Transverse colon (tissue), 4 donors: ENCODE measurements at regions of chr9 and their contacts with region 1.

Region 1: GRCh38 chr9:28970241-28970654 is 1397.0 kb upstream of the C9orf72 start:
- DNase-seq: no peak
- H3K4me3 ChIP-seq: no peak overlapping the region
- H3K27ac ChIP-seq: no peak overlapping the region
- H3K4me1 ChIP-seq: no peaks in the 10 kb centered on the region
- H3K27me3 ChIP-seq: no peaks in the 10 kb centered on the region
- CTCF ChIP-seq: no peak
- EP300 ChIP-seq: no peak
- POLR2A ChIP-seq: no peak

Region 2: GRCh38 chr9:27791311-27791710 is 1178.9 kb before region 1 on chr9:
- in situ Hi-C with region 1: no loop called
- intact Hi-C with region 1: no loop called
- DNase-seq: no peak
- H3K4me3 ChIP-seq: no peak overlapping the region
- H3K27ac ChIP-seq: no peak overlapping the region
- H3K4me1 ChIP-seq: no peaks in the 10 kb centered on the region
- H3K27me3 ChIP-seq: no peaks in the 10 kb centered on the region
- CTCF ChIP-seq: no peak
- EP300 ChIP-seq: no peak
- POLR2A ChIP-seq: no peak

Region 3: GRCh38 chr9:28866951-28867350 is 103.3 kb before region 1 on chr9:
- in situ Hi-C with region 1: no loop called
- intact Hi-C with region 1: no loop called
- DNase-seq: no peak
- H3K4me3 ChIP-seq: no peak overlapping the region
- H3K27ac ChIP-seq: no peak overlapping the region
- H3K4me1 ChIP-seq: no peaks in the 10 kb centered on the region
- H3K27me3 ChIP-seq: no peaks in the 10 kb centered on the region
- CTCF ChIP-seq: no peak
- EP300 ChIP-seq: no peak
- POLR2A ChIP-seq: no peak

Region 4: DNA sequence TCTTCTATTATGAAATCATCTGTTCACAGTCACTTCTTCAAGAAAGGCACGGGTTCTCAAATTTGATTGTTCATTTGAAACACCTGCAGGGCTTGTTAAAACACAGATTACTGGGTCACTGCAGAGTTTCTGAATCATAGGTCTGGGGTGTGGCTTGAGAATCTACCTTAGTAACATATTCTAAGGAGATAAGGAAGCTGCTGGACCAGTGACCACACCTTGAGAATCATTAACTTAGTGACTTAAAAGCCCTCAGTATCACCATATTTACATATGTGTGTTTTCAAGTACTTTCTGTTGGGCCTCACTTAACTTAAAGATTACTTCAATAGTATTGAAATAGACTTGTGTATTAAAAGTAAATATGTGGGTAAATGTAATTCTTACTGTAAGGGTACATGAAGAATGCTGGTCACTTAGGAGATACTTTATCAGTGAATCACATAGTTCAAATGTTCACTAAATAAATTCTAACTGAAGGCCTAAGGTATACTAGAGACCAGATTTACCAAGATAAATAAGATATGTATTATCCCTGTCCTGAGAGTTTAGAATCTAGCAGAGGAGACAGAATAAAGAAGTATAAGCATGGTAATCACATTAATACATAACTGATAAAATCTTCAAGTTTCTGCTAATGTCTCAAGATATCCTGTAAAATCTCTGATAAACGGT is 54.9 kb before region 1 on chr9:
- in situ Hi-C with region 1: no loop called
- intact Hi-C with region 1: loop called (anchors 10 kb)
- DNase-seq: peak; percentile 52
- H3K4me3 ChIP-seq: no peak overlapping the region
- H3K27ac ChIP-seq: peak overlapping the region; percentile 53 to 81 (median 66)
- H3K4me1 ChIP-seq: peaks cover 0 to 18% (median 6%) of the 10 kb centered on the region in 4 donors
- H3K27me3 ChIP-seq: no peaks in the 10 kb centered on the region
- CTCF ChIP-seq: no peak
- EP300 ChIP-seq: no peak
- POLR2A ChIP-seq: no peak

Region 5: DNA sequence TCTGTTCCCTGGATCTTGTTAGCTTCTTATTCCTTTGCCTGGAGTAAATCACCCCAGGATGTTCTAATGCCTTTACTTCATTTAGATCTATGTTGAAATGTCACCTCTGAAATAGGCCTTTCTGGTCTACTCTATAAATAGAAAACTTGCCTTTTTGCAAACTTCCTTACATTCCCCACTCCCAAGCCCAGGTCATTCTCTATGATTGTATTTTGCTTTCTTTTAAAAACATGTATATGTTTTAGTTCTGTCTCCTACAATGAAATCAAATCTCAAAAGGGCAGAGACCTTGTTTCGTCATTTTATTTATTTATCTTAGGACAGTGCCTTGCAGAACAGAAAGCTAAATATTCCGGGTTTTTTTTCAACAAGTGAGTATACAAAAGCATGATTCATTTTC is 260.7 kb after region 1 on chr9:
- in situ Hi-C with region 1: no loop called
- intact Hi-C with region 1: no loop called
- DNase-seq: no peak
- H3K4me3 ChIP-seq: no peak overlapping the region
- H3K27ac ChIP-seq: no peak overlapping the region
- H3K4me1 ChIP-seq: no peaks in the 10 kb centered on the region
- H3K27me3 ChIP-seq: no peaks in the 10 kb centered on the region
- CTCF ChIP-seq: no peak
- EP300 ChIP-seq: no peak
- POLR2A ChIP-seq: no peak

Region 6: DNA sequence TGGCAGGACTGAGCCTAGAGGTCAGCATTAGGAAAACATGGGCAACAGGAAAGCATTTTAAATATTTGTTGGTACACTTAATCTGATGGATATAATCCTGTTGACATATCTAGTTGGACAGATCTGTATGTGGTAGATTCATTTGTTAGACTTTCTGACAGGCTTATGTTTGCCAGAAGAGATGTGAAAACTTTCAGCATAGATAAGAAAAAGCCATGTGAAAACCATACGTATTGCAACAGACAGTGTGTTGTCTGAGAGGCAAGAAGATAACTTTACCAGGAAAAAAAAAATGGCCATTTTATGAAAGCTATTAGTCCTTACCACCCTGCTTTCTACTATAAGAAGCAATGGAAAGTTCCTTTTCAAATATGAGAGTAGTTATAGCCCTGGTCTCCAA is 505.2 kb after region 1 on chr9:
- in situ Hi-C with region 1: no loop called
- intact Hi-C with region 1: no loop called
- DNase-seq: no peak
- H3K4me3 ChIP-seq: no peak overlapping the region
- H3K27ac ChIP-seq: no peak overlapping the region
- H3K4me1 ChIP-seq: no peaks in the 10 kb centered on the region
- H3K27me3 ChIP-seq: no peaks in the 10 kb centered on the region
- CTCF ChIP-seq: no peak
- EP300 ChIP-seq: no peak
- POLR2A ChIP-seq: no peak